ENCODE measurements at regions of chr17 and their contacts with region 1.

Region 1: GRCh38 chr17:72120642-72121163 is at the start of gene SOX9:
- DNase-seq: peak; percentile 91 to 92
- H3K4me3 ChIP-seq: peak within 1 kb of the TSS; percentile 90
- H3K27ac ChIP-seq: peak within 1 kb of the TSS; percentile 89
- H3K4me1 ChIP-seq: peaks cover 40% of the 10 kb centered on the region
- H3K27me3 ChIP-seq: no peaks in the 10 kb centered on the region
- CTCF ChIP-seq: no peak
- total RNA-seq, gene SOX9: 21.7 and 25.0 TPM in 2 replicates

Region 2: DNA sequence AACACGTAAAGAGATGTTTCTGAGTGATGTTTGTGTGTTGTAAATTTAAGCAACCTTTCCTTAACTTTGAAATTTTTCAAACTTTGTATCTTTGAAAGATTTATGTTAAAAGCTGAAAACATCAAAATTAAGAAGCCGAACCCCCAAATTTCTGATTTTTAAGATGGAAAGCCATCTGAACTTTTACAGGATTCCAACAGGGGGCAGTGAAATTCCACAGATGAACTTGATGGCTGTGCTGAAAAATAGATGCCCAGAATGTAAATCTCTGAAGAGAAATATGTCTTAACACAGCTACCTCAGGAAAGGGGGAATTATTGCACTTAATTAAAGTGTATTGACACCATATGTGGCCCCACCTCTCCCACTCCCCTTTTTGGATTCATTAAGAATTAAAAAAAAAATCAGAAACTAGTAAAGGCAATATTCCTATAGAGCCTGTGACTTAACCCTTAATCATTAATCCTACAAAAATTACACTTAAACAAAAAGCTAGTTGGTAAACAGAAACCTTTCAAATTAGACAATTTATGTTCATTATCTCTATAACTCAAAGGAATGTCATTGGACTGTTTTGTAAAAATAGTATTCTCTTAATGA is 1353.5 kb before region 1 on chr17:
- CTCF ChIA-PET with region 1: no interaction called
- POLR2A ChIA-PET with region 1: no interaction called
- intact Hi-C with region 1: loop called (anchors 5 kb)
- DNase-seq: peak in 1 of 2 experiments; percentile 8
- H3K4me3 ChIP-seq: no peak overlapping the region
- H3K27ac ChIP-seq: no peak overlapping the region
- H3K4me1 ChIP-seq: no peaks in the 10 kb centered on the region
- H3K27me3 ChIP-seq: no peaks in the 10 kb centered on the region
- CTCF ChIP-seq: peak; percentile 97

Region 3: DNA sequence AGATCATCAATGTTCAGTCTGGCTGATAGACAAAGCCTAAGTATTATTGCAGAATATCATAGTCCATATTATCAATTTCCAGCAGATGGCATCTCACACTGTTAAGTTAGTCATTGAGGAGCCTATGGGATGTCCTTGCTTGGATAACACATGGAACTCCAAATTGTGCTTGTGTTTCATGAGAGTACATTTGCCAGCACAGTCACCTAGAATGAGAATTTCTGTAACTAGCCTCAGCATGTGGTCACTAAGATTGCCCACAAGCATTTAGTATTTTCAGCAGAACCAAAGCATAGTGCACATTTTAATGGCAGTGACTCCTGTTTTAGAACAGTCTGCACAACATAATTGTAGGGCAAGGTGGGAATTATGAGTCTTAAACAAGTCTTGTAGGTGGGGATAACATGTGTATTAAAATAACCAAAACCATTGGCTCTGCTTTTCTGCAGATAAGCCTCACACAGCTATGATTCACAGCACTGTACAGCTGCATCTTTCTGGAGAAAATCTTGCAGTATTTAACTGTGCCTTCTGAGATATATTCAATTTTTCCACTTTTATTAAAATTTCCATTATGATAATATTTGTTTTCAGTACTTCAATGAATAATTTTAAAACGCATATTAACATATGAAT is 882.7 kb before region 1 on chr17:
- CTCF ChIA-PET with region 1: no interaction called
- POLR2A ChIA-PET with region 1: no interaction called
- intact Hi-C with region 1: loop called (anchors 2 kb)
- DNase-seq: peak in 1 of 2 experiments; percentile 35
- H3K4me3 ChIP-seq: no peak overlapping the region
- H3K27ac ChIP-seq: no peak overlapping the region
- H3K4me1 ChIP-seq: no peaks in the 10 kb centered on the region
- H3K27me3 ChIP-seq: no peaks in the 10 kb centered on the region
- CTCF ChIP-seq: 0 out of 2 replicates have a peak, but pooled peaks have one; percentile 50

Region 4: DNA sequence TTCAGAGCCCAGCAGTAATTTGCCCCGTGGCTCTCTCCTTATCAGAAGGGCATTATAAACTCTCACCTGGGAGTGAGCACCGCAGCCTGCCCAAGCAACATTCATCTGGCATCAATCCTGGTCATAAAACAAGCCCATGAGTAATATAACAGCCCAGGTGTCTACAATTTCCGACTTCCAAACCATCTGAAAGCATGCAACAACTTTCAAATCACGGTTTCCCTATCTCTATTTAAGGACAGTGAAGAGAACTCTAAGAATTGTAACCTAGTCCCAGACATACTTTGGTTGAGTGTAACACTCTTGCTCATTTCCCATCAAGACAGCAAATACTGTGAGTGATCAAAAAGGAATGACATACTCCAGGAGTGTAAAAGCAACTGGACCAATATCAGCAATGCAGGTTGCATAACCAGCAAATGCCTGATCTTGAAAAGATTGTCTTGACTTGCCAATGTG is 487.3 kb before region 1 on chr17:
- CTCF ChIA-PET with region 1: no interaction called
- POLR2A ChIA-PET with region 1: interaction called, 3 read pairs
- intact Hi-C with region 1: loop called (anchors 2 kb)
- DNase-seq: peak; percentile 65 to 97
- H3K4me3 ChIP-seq: no peak overlapping the region; the same call in 1 of the 2 replicates
- H3K27ac ChIP-seq: peak overlapping the region; percentile 72
- H3K4me1 ChIP-seq: peaks cover 35% of the 10 kb centered on the region
- H3K27me3 ChIP-seq: no peaks in the 10 kb centered on the region
- CTCF ChIP-seq: no peak

Region 5: DNA sequence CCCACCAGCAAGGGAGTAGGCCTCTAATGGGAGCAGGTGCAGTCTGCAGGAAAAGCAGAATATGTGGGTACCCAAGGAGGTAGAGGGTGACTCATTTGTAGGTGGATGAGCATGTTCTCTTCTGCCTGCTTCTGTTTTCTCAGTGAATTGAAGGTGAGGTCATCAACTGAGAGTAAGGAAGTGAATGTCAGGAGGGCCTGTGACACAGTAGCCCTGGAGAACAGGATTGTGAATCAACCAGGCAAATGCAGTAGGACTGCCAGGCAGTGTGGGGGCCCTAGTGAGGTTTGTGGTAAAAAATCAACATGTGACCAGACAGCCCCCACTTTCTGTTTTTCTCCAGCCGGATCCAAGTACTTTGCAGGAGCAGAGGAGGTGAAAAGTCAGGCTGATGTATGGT is 150.4 kb before region 1 on chr17:
- CTCF ChIA-PET with region 1: no interaction called
- POLR2A ChIA-PET with region 1: no interaction called
- intact Hi-C with region 1: loop called (anchors 5 kb)
- DNase-seq: peak; percentile 45 to 89
- H3K4me3 ChIP-seq: no peak overlapping the region
- H3K27ac ChIP-seq: peak overlapping the region; percentile 73
- H3K4me1 ChIP-seq: peaks cover 23% of the 10 kb centered on the region
- H3K27me3 ChIP-seq: no peaks in the 10 kb centered on the region
- CTCF ChIP-seq: no peak

Region 6: GRCh38 chr17:72407336-72407909 is 286.7 kb after region 1 on chr17:
- CTCF ChIA-PET with region 1: no interaction called
- POLR2A ChIA-PET with region 1: interaction called, 17 read pairs
- intact Hi-C with region 1: loop called (anchors 5 kb)
- DNase-seq: peak; percentile 90 to 98
- H3K4me3 ChIP-seq: peak overlapping the region; percentile 43; the same call in 1 of the 2 replicates
- H3K27ac ChIP-seq: peak overlapping the region; percentile 99
- H3K4me1 ChIP-seq: peaks cover 71% of the 10 kb centered on the region
- H3K27me3 ChIP-seq: no peaks in the 10 kb centered on the region
- CTCF ChIP-seq: no peak

Region 7: GRCh38 chr17:72539981-72540897 is 419.5 kb after region 1 on chr17:
- CTCF ChIA-PET with region 1: interaction called, 6 read pairs
- POLR2A ChIA-PET with region 1: no interaction called
- intact Hi-C with region 1: loop called (anchors 1 kb)
- DNase-seq: peak; percentile 45 to 88
- H3K4me3 ChIP-seq: peak overlapping the region; percentile 46; the same call in 1 of the 2 replicates
- H3K27ac ChIP-seq: peak overlapping the region; percentile 68
- H3K4me1 ChIP-seq: peaks cover 16% of the 10 kb centered on the region
- H3K27me3 ChIP-seq: no peaks in the 10 kb centered on the region
- CTCF ChIP-seq: peak; percentile 75